Activated CD4-positive, alpha-beta T cell treated with anti-CD3 and anti-CD28 coated beads for 36 hours (primary cell): ENCODE measurements at regions of chr14 and their contacts with region 1.

Region 1: GRCh38 chr14:100067971-100068959 is 3.0 kb downstream of the EVL start:
- DNase-seq: peak; percentile 93
- ATAC-seq: peak; percentile 38
- H3K4me3 Mint-ChIP-seq: peak overlapping the region; percentile 75
- H3K27ac Mint-ChIP-seq: peak overlapping the region; percentile 99
- H3K4me1 Mint-ChIP-seq: peaks cover 64% of the 10 kb centered on the region
- H3K27me3 Mint-ChIP-seq: no peaks in the 10 kb centered on the region

Region 2: GRCh38 chr14:98182393-98183055 is 1885.7 kb before region 1 on chr14:
- CTCF ChIA-PET with region 1: no interaction called
- POLR2A ChIA-PET with region 1: no interaction called
- intact Hi-C with region 1: loop called in 1 of 2 experiments (anchors 5 kb)
- DNase-seq: peak; percentile 86
- ATAC-seq: peak; percentile 74
- H3K4me3 Mint-ChIP-seq: peak overlapping the region; percentile 35
- H3K27ac Mint-ChIP-seq: peak overlapping the region; percentile 100
- H3K4me1 Mint-ChIP-seq: peaks cover 96% of the 10 kb centered on the region
- H3K27me3 Mint-ChIP-seq: no peaks in the 10 kb centered on the region

Region 3: DNA sequence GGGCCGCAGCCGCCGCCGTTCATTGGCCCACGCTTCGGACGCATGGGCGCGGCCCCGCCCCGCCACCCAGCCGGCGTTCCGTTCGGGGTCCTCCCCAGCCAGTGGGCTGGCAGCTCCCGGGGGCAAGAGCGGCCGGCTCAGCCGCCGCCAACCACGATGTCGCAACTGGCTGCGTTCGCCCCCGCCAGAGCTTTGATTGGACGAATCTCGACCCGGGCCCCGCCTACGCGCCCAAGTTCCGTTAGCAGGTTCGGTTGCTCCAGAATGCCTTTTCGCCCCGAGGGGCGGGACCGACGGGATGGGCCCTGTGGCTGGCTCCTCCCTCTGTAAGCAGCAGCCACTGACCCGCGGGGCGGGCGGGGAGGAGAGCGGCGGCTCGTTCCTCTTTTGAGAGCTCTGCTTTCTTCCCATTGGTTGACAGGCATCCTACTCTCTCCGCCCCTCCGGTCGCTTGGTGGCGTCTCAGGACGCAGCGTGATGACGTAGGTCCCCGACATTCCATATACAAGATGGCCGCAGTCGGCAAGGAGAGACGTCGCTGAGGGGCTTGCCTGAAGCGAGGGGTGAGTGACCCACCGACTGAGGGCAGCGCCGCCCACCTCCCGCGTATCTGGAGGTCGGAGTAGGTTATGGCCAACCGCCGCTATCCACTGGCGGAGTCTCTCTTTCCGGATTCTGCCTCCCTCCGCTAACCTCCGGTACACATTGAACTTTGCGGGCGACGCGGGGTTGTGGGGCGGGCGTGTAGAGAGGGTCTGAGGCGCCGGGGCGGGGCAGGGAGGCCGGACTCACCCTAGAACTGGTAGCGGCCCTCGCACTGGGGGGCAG is 587.1 kb before region 1 on chr14 and contains the start of gene CCNK:
- CTCF ChIA-PET with region 1: no interaction called
- POLR2A ChIA-PET with region 1: no interaction called
- intact Hi-C with region 1: loop called (anchors 2 to 10 kb)
- DNase-seq: peak; percentile 100
- ATAC-seq: peak; percentile 95
- H3K4me3 Mint-ChIP-seq: peak within 1 kb of the TSS; percentile 97
- H3K27ac Mint-ChIP-seq: peak within 1 kb of the TSS; percentile 96
- H3K4me1 Mint-ChIP-seq: peaks cover 58% of the 10 kb centered on the region
- H3K27me3 Mint-ChIP-seq: no peaks in the 10 kb centered on the region
- total RNA-seq, gene CCNK: 93.7 to 96.2 TPM

Region 4: GRCh38 chr14:99982537-99983250 is 85.6 kb before region 1 on chr14:
- CTCF ChIA-PET with region 1: interaction called, 28 read pairs
- POLR2A ChIA-PET with region 1: no interaction called
- intact Hi-C with region 1: loop called in 1 of 2 experiments (anchors 5 kb)
- DNase-seq: peak; percentile 77
- ATAC-seq: peak; percentile 94
- H3K4me3 Mint-ChIP-seq: no peak overlapping the region
- H3K27ac Mint-ChIP-seq: peak overlapping the region; percentile 9
- H3K4me1 Mint-ChIP-seq: peaks cover 14% of the 10 kb centered on the region
- H3K27me3 Mint-ChIP-seq: no peaks in the 10 kb centered on the region

Region 5: GRCh38 chr14:100108042-100108825 is 40.0 kb after region 1 on chr14:
- CTCF ChIA-PET with region 1: interaction called, 300 read pairs
- POLR2A ChIA-PET with region 1: interaction called, 162 read pairs
- intact Hi-C with region 1: loop called (anchors 1 kb)
- DNase-seq: peak; percentile 94
- ATAC-seq: peak; percentile 53
- H3K4me3 Mint-ChIP-seq: no peak overlapping the region
- H3K27ac Mint-ChIP-seq: peak overlapping the region; percentile 92
- H3K4me1 Mint-ChIP-seq: peaks cover 74% of the 10 kb centered on the region
- H3K27me3 Mint-ChIP-seq: no peaks in the 10 kb centered on the region

Region 6: DNA sequence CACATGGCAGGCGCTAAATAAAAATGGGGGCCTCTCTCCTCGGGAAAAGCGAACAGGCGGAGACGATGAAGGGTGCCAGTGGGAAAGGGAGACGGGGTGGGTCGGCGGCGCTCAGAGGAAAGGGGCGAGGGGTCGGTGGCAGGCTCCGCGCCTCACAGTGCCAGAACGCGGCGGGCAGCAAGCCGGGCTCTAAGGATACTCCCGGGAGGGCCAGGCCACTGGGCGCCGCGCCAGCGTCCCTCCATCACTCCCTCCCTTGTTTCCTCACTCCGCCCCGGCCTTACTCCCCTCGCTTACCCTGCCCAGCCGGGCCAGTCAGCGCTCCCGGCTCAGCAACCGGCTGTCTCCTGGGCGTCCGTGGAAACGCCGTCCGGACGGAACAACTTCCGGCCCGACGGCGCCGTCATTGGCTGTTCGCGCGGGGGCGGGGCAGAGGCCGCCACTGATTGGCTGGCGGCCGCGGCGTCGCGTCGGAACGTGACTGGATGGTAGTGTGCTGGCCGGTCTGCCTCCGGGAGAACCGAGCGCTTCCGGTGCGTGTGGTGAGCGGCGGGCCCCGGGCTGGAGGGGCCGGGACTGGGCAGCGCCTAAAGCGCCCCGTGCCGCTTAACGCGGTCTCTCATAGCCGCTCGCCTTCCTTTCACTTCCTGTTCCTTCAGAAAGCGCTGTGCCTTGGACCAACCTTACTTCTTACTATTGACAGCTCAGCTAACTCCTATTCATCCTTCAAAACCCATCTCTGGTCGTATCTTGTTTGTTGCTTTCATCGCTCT is 307.9 kb after region 1 on chr14:
- CTCF ChIA-PET with region 1: no interaction called
- POLR2A ChIA-PET with region 1: interaction called, 6 read pairs
- intact Hi-C with region 1: loop called (anchors 1 to 2 kb)
- DNase-seq: peak; percentile 96
- ATAC-seq: peak; percentile 70
- H3K4me3 Mint-ChIP-seq: peak within 1 kb of the TSS; percentile 99
- H3K27ac Mint-ChIP-seq: peak within 1 kb of the TSS; percentile 98
- H3K4me1 Mint-ChIP-seq: peaks cover 37% of the 10 kb centered on the region
- H3K27me3 Mint-ChIP-seq: no peaks in the 10 kb centered on the region

Region 7: DNA sequence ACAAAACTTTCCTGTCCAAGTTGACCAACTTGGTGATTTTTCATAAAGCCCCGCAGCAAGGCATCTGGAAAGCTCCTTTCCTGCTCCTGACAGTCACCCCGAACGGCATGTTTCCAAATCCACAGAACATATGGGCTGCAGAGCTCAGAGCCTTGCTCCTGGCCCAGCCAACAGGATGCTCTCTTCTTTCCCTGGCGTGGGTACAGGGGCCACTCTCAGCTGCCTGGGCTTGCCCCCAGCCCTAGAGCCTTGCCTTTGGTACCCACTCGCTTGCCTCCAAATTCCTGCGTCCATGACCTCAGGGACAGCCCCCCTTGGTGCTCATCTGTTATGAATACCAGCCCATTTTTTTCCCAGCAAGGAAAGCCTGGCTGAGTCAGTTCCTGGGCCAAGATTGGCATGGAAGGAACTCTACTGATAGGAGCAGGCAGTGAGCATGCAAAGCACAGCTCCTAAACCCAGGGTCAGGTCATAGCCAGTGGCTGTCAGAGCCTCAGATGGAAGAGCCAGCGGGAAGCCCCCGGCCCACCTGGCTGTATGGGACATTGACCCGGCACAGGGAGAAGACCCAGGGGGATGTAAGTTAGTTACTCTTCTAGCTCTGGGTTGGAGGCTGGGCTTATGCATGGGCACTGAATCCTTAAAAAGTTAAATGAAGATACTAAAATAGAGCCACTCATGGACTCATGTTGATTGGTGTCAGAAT is 940.5 kb after region 1 on chr14:
- CTCF ChIA-PET with region 1: no interaction called
- POLR2A ChIA-PET with region 1: no interaction called
- intact Hi-C with region 1: no loop called
- DNase-seq: no peak
- ATAC-seq: no peak
- H3K4me3 Mint-ChIP-seq: no peak overlapping the region
- H3K27ac Mint-ChIP-seq: no peak overlapping the region
- H3K4me1 Mint-ChIP-seq: no peaks in the 10 kb centered on the region
- H3K27me3 Mint-ChIP-seq: peaks cover 24% of the 10 kb centered on the region